ENCODE measurements at regions of chr1 and their contacts with region 1.

Region 1: GRCh38 chr1:226827968-226828513 is 42.4 kb upstream of the PSEN2 start:
- H3K4me3 ChIP-seq: no peak overlapping the region
- H3K27ac ChIP-seq: 0 out of 2 replicates have a peak overlapping the region, but pooled peaks have one; percentile 37
- H3K4me1 ChIP-seq: no peaks in the 10 kb centered on the region
- CTCF ChIP-seq: peak; percentile 97

Region 2: DNA sequence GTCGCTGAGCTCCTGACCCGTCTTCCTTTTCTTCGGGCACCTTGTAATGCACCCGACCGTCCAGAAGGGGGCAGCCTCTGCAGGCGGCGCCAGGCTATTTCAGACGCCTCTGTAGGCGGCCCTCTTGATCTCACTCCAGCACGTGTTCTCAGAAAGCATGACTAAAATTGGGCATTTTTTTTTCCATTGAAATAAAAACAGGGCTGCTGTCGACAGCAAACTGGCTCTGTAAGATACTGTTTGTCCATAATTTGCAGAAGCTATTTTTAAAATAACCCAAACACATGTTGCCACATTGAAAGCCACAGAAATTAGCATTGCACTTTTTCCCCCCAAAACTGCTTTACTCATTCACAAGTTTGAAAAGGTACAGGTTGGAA is 201.5 kb before region 1 on chr1:
- CTCF ChIA-PET with region 1: interaction called, 155 read pairs
- POLR2A ChIA-PET with region 1: no interaction called
- H3K4me3 ChIP-seq: no peak overlapping the region
- H3K27ac ChIP-seq: no peak overlapping the region
- H3K4me1 ChIP-seq: no peaks in the 10 kb centered on the region
- CTCF ChIP-seq: peak; percentile 86

Region 3: DNA sequence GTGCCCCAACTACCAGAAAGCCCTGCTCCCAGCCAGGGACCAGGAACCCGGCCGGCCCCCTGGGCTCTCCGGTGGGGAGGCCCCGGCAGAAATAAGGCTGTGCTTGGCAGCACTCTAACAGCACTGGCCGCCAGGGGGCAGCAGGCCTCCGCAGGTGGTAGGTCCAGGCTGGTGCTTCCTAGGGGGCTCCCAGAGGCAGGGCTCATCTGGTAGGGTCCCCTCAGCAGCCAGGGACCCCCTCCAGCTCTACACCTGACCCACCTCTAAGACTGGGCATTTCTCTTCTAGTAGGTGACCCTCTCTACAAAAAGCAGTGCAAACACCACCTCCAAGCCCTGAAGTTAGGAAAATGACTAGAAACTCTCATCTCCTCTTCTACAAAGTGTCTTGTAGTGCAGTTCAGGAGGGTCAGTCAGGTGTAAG is 193.9 kb before region 1 on chr1:
- CTCF ChIA-PET with region 1: interaction called, 155 read pairs
- POLR2A ChIA-PET with region 1: no interaction called
- H3K4me3 ChIP-seq: no peak overlapping the region
- H3K27ac ChIP-seq: no peak overlapping the region
- H3K4me1 ChIP-seq: no peaks in the 10 kb centered on the region
- CTCF ChIP-seq: peak; percentile 97

Region 4: GRCh38 chr1:226649780-226650179 is 178.3 kb before region 1 on chr1:
- CTCF ChIA-PET with region 1: interaction called, 17 read pairs
- POLR2A ChIA-PET with region 1: no interaction called
- H3K4me3 ChIP-seq: no peak overlapping the region
- H3K27ac ChIP-seq: no peak overlapping the region
- H3K4me1 ChIP-seq: no peaks in the 10 kb centered on the region
- CTCF ChIP-seq: no peak; the same call in none of the 2 replicates